ENCODE measurements at regions of chr5 and their contacts with region 1.

Region 1: GRCh38 chr5:150175076-150175935 is 8.7 kb downstream of the CDX1 start:
- DNase-seq: peak; percentile 19
- ATAC-seq: peak; percentile 95
- H3K4me3 ChIP-seq: no peak overlapping the region
- H3K27ac ChIP-seq: no peak overlapping the region
- H3K4me1 ChIP-seq: no peaks in the 10 kb centered on the region
- H3K27me3 ChIP-seq: peaks cover 6% of the 10 kb centered on the region
- CTCF ChIP-seq: peak; percentile 36 to 77 (median 70); a peak in 5 of 6 replicates
- POLR2A ChIP-seq: no peak
- RAD21 ChIP-seq: peak; percentile 29; the same call in 1 of the 2 replicates

Region 2: GRCh38 chr5:150129813-150130492 is 45.4 kb before region 1 on chr5:
- CTCF ChIA-PET with region 1: no interaction called
- POLR2A ChIA-PET with region 1: no interaction called
- RAD21 ChIA-PET with region 1: no interaction called
- intact Hi-C with region 1: loop called (anchors 1 kb)
- DNase-seq: peak; percentile 43
- ATAC-seq: peak; percentile 96
- H3K4me3 ChIP-seq: peak overlapping the region in 1 of 2 experiments; percentile 25; a peak in 1 of 4 replicates
- H3K27ac ChIP-seq: no peak overlapping the region
- H3K4me1 ChIP-seq: peaks cover 0 to 9% of the 10 kb centered on the region in 2 experiments; a peak in 1 of 4 replicates
- H3K27me3 ChIP-seq: no peaks in the 10 kb centered on the region
- CTCF ChIP-seq: peak; percentile 91 to 94 (median 94)
- POLR2A ChIP-seq: no peak
- RAD21 ChIP-seq: peak; percentile 97

Region 3: GRCh38 chr5:150161242-150162141 is 13.8 kb before region 1 on chr5:
- CTCF ChIA-PET with region 1: interaction called, 10 read pairs
- POLR2A ChIA-PET with region 1: no interaction called
- RAD21 ChIA-PET with region 1: no interaction called
- intact Hi-C with region 1: no loop called
- DNase-seq: peak; percentile 63
- ATAC-seq: peak; percentile 93
- H3K4me3 ChIP-seq: peak overlapping the region; percentile 29 to 52
- H3K27ac ChIP-seq: peak overlapping the region; percentile 20; the same call in 1 of the 2 replicates
- H3K4me1 ChIP-seq: peaks cover 3 to 19% of the 10 kb centered on the region in 2 experiments; a peak in 3 of 4 replicates
- H3K27me3 ChIP-seq: no peaks in the 10 kb centered on the region
- CTCF ChIP-seq: peak in 2 of 3 experiments; percentile 78 to 96; a peak in 4 of 6 replicates
- POLR2A ChIP-seq: no peak
- RAD21 ChIP-seq: no peak